ENCODE measurements at regions of chr14 and their contacts with region 1.

Region 1: DNA sequence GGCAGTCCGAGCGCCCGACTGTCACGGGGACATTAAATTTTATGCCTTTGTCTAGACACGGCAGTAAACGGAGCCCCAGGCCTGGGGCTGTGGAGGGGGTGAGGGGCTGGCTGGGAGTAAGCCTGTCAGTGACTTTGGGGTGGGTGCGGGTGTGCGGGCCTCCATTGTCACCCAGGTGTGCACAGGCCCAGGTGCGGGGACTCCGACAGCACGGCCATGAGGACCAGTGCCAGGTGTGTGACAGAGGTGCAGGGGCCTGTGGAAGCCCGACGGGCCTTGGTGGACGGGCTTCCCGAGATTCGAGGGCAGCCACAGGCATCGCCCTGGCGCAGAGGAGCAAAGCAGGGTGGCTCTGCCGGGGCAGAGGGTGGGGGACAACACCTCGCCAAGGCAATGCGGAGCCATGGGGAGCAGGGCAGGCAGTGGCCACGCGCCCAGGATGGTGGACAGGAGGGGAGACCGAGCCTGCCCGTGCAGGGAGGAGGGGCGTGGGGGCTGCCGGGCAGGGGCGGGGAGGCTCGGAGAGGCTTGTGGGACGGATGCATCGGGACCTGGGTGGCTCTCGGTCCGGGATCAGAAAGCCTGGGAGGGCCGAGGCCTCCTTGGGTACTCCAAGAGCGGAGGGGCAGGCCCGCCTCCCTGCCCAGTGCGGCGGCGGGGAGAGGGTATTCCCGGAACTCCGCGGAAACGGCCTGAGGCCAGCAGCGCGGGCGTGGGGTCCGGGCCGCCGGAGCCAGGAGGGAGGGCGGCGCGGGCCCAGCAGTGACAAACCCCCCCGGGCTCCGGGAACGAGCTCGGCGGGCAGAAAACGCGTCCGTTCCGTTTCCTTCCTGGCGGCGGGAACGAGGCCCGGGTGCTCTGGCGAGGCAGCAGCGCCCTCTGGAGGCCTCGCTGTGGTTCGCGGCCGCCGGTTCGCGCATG is 1.5 kb downstream of the TMEM121 start:
- DNase-seq: peak; percentile 89
- ATAC-seq: peak; percentile 50
- H3K4me3 ChIP-seq: peak overlapping the region in 4 of 5 experiments; percentile 37 to 66 (median 60)
- H3K4me3 Mint-ChIP-seq: peak overlapping the region; percentile 80
- H3K27ac ChIP-seq: peak overlapping the region in 1 of 2 donors; percentile 30
- H3K27ac Mint-ChIP-seq: no peak overlapping the region
- H3K4me1 ChIP-seq: peaks cover 58 to 64% of the 10 kb centered on the region in 2 donors
- H3K4me1 Mint-ChIP-seq: peaks cover 49% of the 10 kb centered on the region
- H3K27me3 ChIP-seq: peaks cover 0 to 48% (median 9%) of the 10 kb centered on the region in 4 experiments
- H3K27me3 Mint-ChIP-seq: no peaks in the 10 kb centered on the region
- CTCF ChIP-seq: peak; percentile 85

Region 2: GRCh38 chr14:105203057-105203531 is 324.8 kb before region 1 on chr14:
- CTCF ChIA-PET with region 1: interaction called, 4 read pairs
- POLR2A ChIA-PET with region 1: no interaction called
- intact Hi-C with region 1: loop called (anchors 5 kb)
- DNase-seq: peak; percentile 77
- ATAC-seq: peak; percentile 45
- H3K4me3 ChIP-seq: no peak overlapping the region
- H3K4me3 Mint-ChIP-seq: no peak overlapping the region
- H3K27ac ChIP-seq: no peak overlapping the region
- H3K27ac Mint-ChIP-seq: no peak overlapping the region
- H3K4me1 ChIP-seq: peaks cover 18 to 29% of the 10 kb centered on the region in 2 donors
- H3K4me1 Mint-ChIP-seq: peaks cover 17% of the 10 kb centered on the region
- H3K27me3 ChIP-seq: peaks cover 0 to 53% (median 14%) of the 10 kb centered on the region in 4 experiments
- H3K27me3 Mint-ChIP-seq: peaks cover 18% of the 10 kb centered on the region
- CTCF ChIP-seq: peak; percentile 95

Region 3: GRCh38 chr14:105290621-105291346 is 237.1 kb before region 1 on chr14:
- CTCF ChIA-PET with region 1: no interaction called
- POLR2A ChIA-PET with region 1: no interaction called
- intact Hi-C with region 1: no loop called
- DNase-seq: peak; percentile 32
- ATAC-seq: peak; percentile 18
- H3K4me3 ChIP-seq: no peak overlapping the region
- H3K4me3 Mint-ChIP-seq: peak overlapping the region; percentile 32
- H3K27ac ChIP-seq: no peak overlapping the region
- H3K27ac Mint-ChIP-seq: peak overlapping the region; percentile 46
- H3K4me1 ChIP-seq: peaks cover 41 to 53% of the 10 kb centered on the region in 2 donors
- H3K4me1 Mint-ChIP-seq: peaks cover 49% of the 10 kb centered on the region
- H3K27me3 ChIP-seq: no peaks in the 10 kb centered on the region
- H3K27me3 Mint-ChIP-seq: no peaks in the 10 kb centered on the region
- CTCF ChIP-seq: no peak

Region 4: GRCh38 chr14:105375635-105376057 is 152.3 kb before region 1 on chr14:
- CTCF ChIA-PET with region 1: interaction called, 52 read pairs
- POLR2A ChIA-PET with region 1: no interaction called
- intact Hi-C with region 1: no loop called
- DNase-seq: no peak
- ATAC-seq: no peak
- H3K4me3 ChIP-seq: no peak overlapping the region
- H3K4me3 Mint-ChIP-seq: no peak overlapping the region
- H3K27ac ChIP-seq: no peak overlapping the region
- H3K27ac Mint-ChIP-seq: no peak overlapping the region
- H3K4me1 ChIP-seq: peaks cover 0 to 11% of the 10 kb centered on the region in 2 donors
- H3K4me1 Mint-ChIP-seq: peaks cover 10% of the 10 kb centered on the region
- H3K27me3 ChIP-seq: no peaks in the 10 kb centered on the region
- H3K27me3 Mint-ChIP-seq: no peaks in the 10 kb centered on the region
- CTCF ChIP-seq: no peak

Region 5: GRCh38 chr14:105414456-105415371 is 113.2 kb before region 1 on chr14:
- CTCF ChIA-PET with region 1: no interaction called
- POLR2A ChIA-PET with region 1: interaction called, 10 read pairs
- intact Hi-C with region 1: no loop called
- DNase-seq: peak; percentile 78
- ATAC-seq: peak; percentile 78
- H3K4me3 ChIP-seq: peak overlapping the region in 4 of 5 experiments; percentile 19 to 71 (median 53)
- H3K4me3 Mint-ChIP-seq: peak overlapping the region; percentile 83
- H3K27ac ChIP-seq: no peak overlapping the region
- H3K27ac Mint-ChIP-seq: no peak overlapping the region
- H3K4me1 ChIP-seq: peaks cover 28 to 31% of the 10 kb centered on the region in 2 donors
- H3K4me1 Mint-ChIP-seq: peaks cover 26% of the 10 kb centered on the region
- H3K27me3 ChIP-seq: peaks cover 0 to 36% (median 15%) of the 10 kb centered on the region in 4 experiments
- H3K27me3 Mint-ChIP-seq: peaks cover 11% of the 10 kb centered on the region
- CTCF ChIP-seq: peak; percentile 91

Region 6: DNA sequence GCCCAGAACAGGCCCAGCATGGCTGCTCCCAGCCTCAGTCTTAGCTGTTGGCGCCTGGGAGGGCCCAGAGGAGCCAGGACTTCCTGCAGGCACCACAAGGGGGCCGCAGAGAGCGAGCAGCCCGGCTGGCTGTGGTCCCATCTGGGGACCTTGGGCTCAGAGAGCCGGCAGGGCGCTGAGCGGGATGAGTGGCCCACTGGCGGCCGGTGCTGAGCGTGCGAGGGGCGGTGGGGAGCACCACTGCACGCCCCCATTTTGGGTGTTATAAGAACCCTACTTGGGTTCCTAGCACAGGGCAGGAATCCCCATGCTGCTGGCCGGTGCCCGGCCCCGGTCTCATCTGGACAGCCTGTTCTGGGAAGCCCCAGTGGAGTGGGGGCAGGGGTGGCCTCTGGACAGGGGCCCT is 79.2 kb before region 1 on chr14:
- CTCF ChIA-PET with region 1: interaction called, 8 read pairs
- POLR2A ChIA-PET with region 1: no interaction called
- intact Hi-C with region 1: loop called (anchors 2 kb)
- DNase-seq: peak; percentile 77
- ATAC-seq: peak; percentile 95
- H3K4me3 ChIP-seq: no peak overlapping the region
- H3K4me3 Mint-ChIP-seq: no peak overlapping the region
- H3K27ac ChIP-seq: no peak overlapping the region
- H3K27ac Mint-ChIP-seq: no peak overlapping the region
- H3K4me1 ChIP-seq: no peaks in the 10 kb centered on the region
- H3K4me1 Mint-ChIP-seq: no peaks in the 10 kb centered on the region
- H3K27me3 ChIP-seq: no peaks in the 10 kb centered on the region
- H3K27me3 Mint-ChIP-seq: no peaks in the 10 kb centered on the region
- CTCF ChIP-seq: peak; percentile 86

Region 7: DNA sequence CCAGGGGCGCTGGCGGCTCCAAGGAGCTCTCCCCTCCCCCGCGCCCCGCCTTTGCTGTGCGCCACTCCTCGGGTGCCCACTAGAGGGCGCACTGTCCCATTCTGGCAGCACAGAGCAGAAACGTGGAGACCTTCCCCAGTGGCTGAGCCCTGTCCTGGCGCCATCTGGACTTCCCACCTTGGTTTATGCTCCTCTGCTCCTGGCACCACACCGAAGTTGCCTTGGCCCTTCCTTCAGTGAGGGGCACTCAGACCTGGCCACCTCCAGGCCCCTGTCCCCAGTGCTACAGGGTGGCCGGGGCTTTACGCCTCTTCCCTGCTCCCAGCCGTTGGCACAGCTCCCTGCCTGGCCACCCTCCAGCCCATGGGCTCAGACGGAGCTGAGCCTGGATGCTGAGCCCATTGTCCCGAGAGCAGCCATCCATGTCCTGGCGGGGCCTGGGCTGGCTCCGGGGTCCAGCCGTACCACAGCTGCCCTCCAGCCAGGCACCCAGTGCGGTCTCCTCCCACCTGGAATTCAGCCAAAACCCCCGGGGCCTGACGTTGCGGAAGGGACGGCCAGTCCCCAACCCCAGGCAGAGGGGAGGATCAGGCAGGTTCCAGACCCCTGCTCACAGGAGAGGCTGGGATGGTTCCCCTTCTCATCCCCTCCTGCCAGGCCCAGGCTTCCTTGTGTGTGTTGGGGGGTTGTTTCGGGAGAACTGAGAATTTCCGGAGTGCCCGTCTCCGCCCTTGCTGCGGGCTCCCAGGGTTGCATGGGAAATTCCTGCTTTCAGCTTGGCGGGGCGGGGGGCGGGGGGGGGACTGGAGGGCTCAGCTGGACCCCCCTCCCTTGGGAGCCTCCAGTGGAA is 46.7 kb before region 1 on chr14:
- CTCF ChIA-PET with region 1: interaction called, 13 read pairs
- POLR2A ChIA-PET with region 1: no interaction called
- intact Hi-C with region 1: no loop called
- DNase-seq: peak; percentile 94
- ATAC-seq: peak; percentile 52
- H3K4me3 ChIP-seq: peak overlapping the region in 4 of 5 experiments; percentile 44 to 66 (median 52)
- H3K4me3 Mint-ChIP-seq: peak overlapping the region; percentile 84
- H3K27ac ChIP-seq: peak overlapping the region; percentile 93 to 99
- H3K27ac Mint-ChIP-seq: peak overlapping the region; percentile 100
- H3K4me1 ChIP-seq: peaks cover 59 to 88% of the 10 kb centered on the region in 2 donors
- H3K4me1 Mint-ChIP-seq: peaks cover 67% of the 10 kb centered on the region
- H3K27me3 ChIP-seq: peaks cover 0 to 13% (median 4%) of the 10 kb centered on the region in 4 experiments
- H3K27me3 Mint-ChIP-seq: no peaks in the 10 kb centered on the region
- CTCF ChIP-seq: peak; percentile 95

Region 8: DNA sequence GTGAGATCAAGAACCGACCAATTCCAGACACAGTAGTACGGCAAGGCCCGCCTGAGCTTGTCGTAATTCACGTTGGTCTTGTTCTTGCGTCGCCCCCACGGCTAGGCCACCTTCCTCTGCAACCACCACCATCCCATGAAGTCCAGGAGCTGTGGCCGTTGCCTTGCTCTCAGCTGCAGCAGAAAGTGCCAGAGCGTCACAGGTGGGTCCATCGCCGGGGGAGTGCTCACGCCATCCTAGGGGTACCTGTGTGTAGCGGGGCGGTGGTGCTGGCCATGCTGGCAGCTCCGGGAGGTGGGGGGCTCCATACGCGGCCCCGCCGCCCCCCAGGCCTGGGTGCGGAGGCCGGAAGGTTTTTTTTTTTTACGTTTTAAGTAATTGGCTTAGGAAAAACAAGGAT is 21.6 kb after region 1 on chr14:
- CTCF ChIA-PET with region 1: interaction called, 10 read pairs
- POLR2A ChIA-PET with region 1: interaction called, 5 read pairs
- intact Hi-C with region 1: no loop called
- DNase-seq: no peak
- ATAC-seq: no peak
- H3K4me3 ChIP-seq: no peak overlapping the region
- H3K4me3 Mint-ChIP-seq: no peak overlapping the region
- H3K27ac ChIP-seq: no peak overlapping the region
- H3K27ac Mint-ChIP-seq: no peak overlapping the region
- H3K4me1 ChIP-seq: no peaks in the 10 kb centered on the region
- H3K4me1 Mint-ChIP-seq: no peaks in the 10 kb centered on the region
- H3K27me3 ChIP-seq: no peaks in the 10 kb centered on the region
- H3K27me3 Mint-ChIP-seq: peaks cover 3% of the 10 kb centered on the region
- CTCF ChIP-seq: no peak